Left colon (tissue), 2 donors: ENCODE measurements at regions of chr18 and their contacts with region 1.

Region 1: GRCh38 chr18:50786864-50787263 is 33.0 kb downstream of the MRO start:
- DNase-seq: no peak
- ATAC-seq: peak; percentile 41

Region 2: DNA sequence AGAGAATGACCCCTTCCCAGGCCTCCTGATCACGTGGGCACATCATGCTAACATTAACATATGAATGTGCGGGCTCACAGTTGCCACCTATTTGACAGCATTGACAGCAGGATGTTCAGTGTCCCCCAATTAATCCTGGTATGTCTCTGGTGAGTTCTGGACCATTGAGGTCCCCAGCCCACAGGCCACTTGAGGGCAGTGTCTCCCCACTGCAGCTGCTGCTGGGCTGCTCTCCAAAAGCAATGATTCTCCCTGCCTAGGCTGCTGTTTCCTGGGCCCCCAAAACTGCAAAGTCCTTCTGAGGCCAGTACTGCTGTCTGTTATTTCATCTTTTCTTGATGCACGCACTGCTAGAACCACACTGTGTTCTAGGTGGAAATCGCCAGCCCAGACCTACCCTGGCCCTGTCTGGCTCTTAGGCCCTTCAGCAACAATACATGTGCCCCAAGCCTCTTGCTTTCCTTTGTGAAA is 279.7 kb before region 1 on chr18:
- intact Hi-C with region 1: loop called in 1 of 2 experiments (anchors 5 kb)
- DNase-seq: peak in 1 of 2 donors; percentile 52
- ATAC-seq: peak; percentile 77